Right ventricle myocardium inferior (tissue), 1 donor: ENCODE measurements at regions of chr10 and their contacts with region 1.

Region 1: DNA sequence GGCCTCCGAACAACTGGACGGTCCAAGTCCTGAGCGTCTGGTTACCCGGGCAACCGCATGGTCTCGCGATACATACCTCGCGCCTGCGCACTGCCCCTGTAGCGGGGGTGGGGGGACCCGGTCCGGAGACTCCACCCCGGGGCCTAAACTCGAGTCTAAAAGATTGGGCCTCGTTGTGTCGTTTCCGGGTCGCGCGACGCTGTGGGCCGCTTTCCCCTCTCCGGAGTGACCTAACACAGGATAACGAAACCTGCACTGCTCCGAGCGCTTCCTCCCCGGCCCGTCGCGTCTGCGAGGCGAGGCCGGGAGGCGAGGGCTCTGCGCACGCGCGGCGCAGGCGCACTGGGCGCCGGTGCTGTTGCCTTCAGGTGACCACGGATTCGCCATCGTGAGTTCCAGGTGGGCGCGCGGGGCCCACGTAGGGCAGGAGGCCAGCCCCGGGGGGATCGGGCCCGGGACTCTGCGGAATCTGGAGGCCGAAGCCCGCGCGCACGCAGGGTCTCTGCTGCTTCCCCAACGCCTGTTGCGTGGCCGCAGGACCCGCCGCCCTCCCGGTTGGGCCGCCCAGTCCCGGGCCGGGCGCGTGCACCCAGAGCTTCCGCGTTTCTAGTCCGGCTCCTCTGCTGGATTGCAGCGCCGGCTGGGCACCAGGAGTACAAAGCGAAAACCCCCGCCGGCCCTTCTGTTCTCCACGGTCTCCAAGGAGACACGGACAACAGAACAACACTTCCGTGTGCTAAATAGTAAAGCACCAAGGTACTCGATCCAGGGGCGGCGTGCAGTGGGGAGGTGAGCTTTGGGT is at the start of gene RPP38:
- DNase-seq: peak; percentile 98
- ATAC-seq: peak; percentile 99
- total RNA-seq, gene RPP38: 9.1 TPM

Region 2: DNA sequence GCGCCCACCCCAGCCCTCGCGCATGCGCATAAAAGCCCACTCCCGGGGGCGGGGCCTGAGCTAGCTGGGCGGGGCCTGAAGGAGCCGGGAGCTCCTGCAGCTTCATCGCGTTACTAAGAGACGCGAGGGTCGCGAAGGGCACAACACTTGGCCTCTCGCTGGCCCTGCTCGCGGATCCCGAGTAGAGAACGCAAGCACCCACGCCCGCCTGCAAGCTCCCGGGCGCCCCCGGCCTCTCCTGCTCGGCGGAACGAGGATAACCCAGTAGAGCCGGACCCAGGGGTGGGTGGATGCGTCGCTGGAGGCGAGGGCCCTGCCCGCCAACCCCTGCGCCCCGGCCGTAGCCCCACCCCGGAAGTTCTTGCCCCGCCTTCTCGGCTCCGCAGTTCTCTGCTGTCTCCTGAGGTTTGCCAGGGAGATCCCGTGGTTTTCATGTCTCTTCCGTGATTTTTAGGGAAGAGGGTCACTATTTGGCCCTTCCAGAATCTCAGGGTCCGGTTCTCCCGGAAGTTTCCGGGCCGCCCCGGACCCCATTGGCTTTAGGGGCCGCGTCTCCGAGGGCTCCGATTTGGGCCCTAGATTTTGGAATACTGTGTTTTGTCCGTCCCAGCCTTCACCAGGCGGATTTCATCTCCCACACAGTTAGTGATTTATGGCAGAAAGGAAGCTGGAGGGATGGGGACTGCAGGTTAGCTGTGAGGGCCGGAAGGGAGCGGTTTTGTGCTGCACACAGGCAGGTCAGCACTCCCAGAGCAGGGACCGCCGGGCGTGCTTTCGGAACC is 137.7 kb before region 1 on chr10 and contains the start of gene MEIG1:
- intact Hi-C with region 1: loop called (anchors 5 kb)
- DNase-seq: peak; percentile 95
- ATAC-seq: peak; percentile 99
- total RNA-seq, gene MEIG1: not detected